Ascending aorta (tissue), 2 donors: ENCODE measurements at regions of chr15 and their contacts with region 1.

Region 1: DNA sequence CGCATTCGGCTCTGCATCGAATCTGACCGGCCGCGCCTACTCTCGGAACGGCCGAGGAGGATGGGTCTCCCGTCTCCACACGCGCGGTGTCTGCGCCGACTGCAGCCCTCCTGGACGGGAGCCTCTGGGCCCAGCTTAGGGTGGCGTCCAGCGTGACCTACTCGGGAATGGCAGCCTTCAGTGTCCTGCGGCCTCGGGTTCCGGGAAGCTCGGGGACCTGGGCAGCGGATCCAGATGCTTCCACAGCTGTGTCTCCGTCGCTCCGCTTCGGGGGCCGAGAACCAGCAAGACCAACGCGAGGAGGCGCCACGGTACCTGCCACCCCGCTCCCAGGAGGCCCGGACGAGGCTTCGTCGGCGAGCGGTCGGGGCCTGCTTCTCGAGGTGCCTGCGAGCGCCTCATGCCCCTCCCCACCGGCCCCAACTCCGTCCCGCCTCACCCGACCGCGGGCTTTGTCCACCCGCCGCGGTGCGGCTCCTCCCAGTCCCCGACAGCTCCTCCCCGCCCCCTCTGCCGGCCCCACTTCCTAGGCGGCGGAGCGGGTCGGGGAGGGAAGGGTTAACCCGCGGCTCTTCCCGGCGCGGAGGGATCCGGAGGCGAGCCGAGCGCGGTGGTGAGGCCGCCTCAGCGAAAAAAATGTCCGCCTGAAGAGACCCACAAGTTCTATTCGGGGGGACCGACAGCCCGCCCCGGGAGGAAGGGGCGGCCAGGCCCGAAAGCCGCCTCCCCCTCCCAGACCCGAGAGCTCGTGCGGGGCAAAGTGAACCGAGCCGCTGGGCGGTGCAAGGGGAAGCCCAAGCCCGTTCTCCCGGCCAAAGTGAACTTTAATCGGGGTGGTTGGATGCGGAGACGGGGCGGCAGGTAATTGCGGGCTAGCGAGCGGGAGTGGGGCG is at the start of gene TCF12:
- DNase-seq: peak; percentile 68 to 96
- H3K4me3 ChIP-seq: peak within 1 kb of the TSS; percentile 87 to 97
- H3K27ac ChIP-seq: peak within 1 kb of the TSS; percentile 97 to 98
- H3K4me1 ChIP-seq: peaks cover 0 to 31% of the 10 kb centered on the region in 2 donors
- H3K27me3 ChIP-seq: no peaks in the 10 kb centered on the region
- CTCF ChIP-seq: peak; percentile 27 to 50 (median 29)
- total RNA-seq, gene TCF12: 144 TPM

Region 2: GRCh38 chr15:56245871-56246814 is 672.1 kb before region 1 on chr15:
- intact Hi-C with region 1: loop called (anchors 10 kb)
- DNase-seq: peak; percentile 21 to 93
- H3K4me3 ChIP-seq: peak overlapping the region; percentile 37 to 48
- H3K27ac ChIP-seq: peak overlapping the region; percentile 31 to 66
- H3K4me1 ChIP-seq: peaks cover 0 to 10% of the 10 kb centered on the region in 2 donors
- H3K27me3 ChIP-seq: no peaks in the 10 kb centered on the region
- CTCF ChIP-seq: peak; percentile 93 to 99 (median 99)

Region 3: GRCh38 chr15:56805466-56806146 is 112.7 kb before region 1 on chr15:
- intact Hi-C with region 1: loop called (anchors 10 kb)
- DNase-seq: peak in 1 of 2 donors; percentile 69
- H3K4me3 ChIP-seq: peak overlapping the region; percentile 20 to 22
- H3K27ac ChIP-seq: no peak overlapping the region
- H3K4me1 ChIP-seq: no peaks in the 10 kb centered on the region
- H3K27me3 ChIP-seq: no peaks in the 10 kb centered on the region
- CTCF ChIP-seq: no peak

Region 4: GRCh38 chr15:56886932-56887781 is 31.1 kb before region 1 on chr15:
- intact Hi-C with region 1: loop called (anchors 1 kb)
- DNase-seq: peak; percentile 64 to 96
- H3K4me3 ChIP-seq: peak overlapping the region; percentile 68 to 93
- H3K27ac ChIP-seq: peak overlapping the region; percentile 93 to 99
- H3K4me1 ChIP-seq: peaks cover 3 to 20% of the 10 kb centered on the region in 2 donors
- H3K27me3 ChIP-seq: no peaks in the 10 kb centered on the region
- CTCF ChIP-seq: no peak

Region 5: GRCh38 chr15:56901931-56902330 is 16.4 kb before region 1 on chr15:
- intact Hi-C with region 1: no loop called
- DNase-seq: no peak
- H3K4me3 ChIP-seq: no peak overlapping the region
- H3K27ac ChIP-seq: no peak overlapping the region
- H3K4me1 ChIP-seq: no peaks in the 10 kb centered on the region
- H3K27me3 ChIP-seq: no peaks in the 10 kb centered on the region
- CTCF ChIP-seq: no peak

Region 6: DNA sequence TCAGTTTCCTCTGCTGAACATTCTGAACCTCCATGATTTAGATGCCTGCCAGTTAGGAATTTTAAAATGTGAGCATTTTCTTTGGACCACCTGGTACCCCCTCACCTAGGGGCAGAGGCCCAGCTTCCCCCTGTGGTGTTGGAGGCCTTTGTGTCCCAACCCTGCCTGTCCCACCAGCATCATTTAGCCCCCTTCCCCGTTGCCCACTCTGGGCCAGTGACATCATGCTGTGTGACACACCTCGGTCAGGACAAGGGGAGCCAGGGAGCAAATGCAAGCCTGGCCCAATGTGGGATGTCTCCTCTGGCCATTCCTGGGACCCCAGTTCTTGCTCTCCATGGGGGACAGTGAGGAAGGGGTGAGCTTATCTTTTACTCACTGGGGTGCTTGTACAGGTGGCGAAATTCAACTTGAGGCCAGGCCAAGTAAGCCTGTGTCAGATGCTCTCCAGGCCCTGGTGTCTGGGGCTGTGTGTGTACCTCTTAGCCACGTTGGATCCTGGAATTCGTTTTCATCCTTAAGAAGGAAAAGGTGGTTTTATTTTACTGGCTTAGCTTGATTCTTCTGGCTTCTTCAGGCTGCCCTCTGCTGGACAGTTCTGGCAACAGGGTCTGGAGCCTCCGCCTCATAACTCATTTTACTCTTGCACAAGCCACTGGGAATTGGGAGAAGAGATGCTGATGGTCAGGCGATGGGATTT is 623.7 kb after region 1 on chr15:
- intact Hi-C with region 1: loop called (anchors 10 kb)
- DNase-seq: peak in 1 of 2 donors; percentile 84
- H3K4me3 ChIP-seq: no peak overlapping the region
- H3K27ac ChIP-seq: no peak overlapping the region
- H3K4me1 ChIP-seq: peaks cover 4 to 10% of the 10 kb centered on the region in 2 donors
- H3K27me3 ChIP-seq: no peaks in the 10 kb centered on the region
- CTCF ChIP-seq: peak; percentile 48 to 86 (median 65)